B cell (primary cell): ENCODE measurements at regions of chr12 and their contacts with region 1.

Region 1: DNA sequence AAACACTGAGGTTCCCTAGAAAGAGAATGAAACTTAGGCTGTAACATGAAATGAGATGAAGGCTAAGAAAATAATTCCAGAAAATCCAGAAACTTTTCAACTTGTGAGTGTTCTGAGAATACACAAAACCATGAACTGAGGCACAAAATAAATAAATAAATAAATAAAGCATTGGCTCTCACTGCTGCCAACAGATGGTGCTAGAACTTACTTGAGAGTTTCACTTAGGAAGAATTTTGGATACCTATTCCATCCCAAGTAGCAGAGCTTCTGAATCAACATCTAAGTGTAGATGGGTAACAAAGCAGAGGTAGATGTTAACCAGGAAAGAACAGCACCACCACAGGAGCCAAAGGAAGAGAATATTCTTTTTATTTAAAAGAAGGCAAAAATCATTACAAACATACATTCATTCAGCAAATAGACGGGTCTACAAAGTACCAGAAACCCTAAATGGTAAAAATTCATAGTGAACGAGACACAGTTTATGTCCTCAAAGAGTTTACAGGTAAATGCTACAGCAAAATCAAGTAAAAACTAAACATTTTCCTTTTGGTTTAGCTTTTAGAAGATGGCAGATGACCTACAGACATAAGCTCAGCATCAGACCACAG is 16.7 kb downstream of the EPS8 start:
- DNase-seq: peak; percentile 22
- ATAC-seq: no peak
- H3K4me3 ChIP-seq: no peak overlapping the region
- H3K4me3 Mint-ChIP-seq: no peak overlapping the region
- H3K27ac ChIP-seq: no peak overlapping the region
- H3K27ac Mint-ChIP-seq: no peak overlapping the region
- H3K4me1 ChIP-seq: no peaks in the 10 kb centered on the region
- H3K4me1 Mint-ChIP-seq: no peaks in the 10 kb centered on the region
- H3K27me3 ChIP-seq: no peaks in the 10 kb centered on the region
- H3K27me3 Mint-ChIP-seq: peaks cover 11% of the 10 kb centered on the region
- CTCF ChIP-seq: peak; percentile 51

Region 2: GRCh38 chr12:15819644-15820437 is 47.3 kb after region 1 on chr12:
- CTCF ChIA-PET with region 1: no interaction called
- POLR2A ChIA-PET with region 1: no interaction called
- intact Hi-C with region 1: loop called (anchors 5 kb)
- DNase-seq: no peak
- ATAC-seq: no peak
- H3K4me3 ChIP-seq: no peak overlapping the region
- H3K4me3 Mint-ChIP-seq: no peak overlapping the region
- H3K27ac ChIP-seq: no peak overlapping the region
- H3K27ac Mint-ChIP-seq: no peak overlapping the region
- H3K4me1 ChIP-seq: no peaks in the 10 kb centered on the region
- H3K4me1 Mint-ChIP-seq: no peaks in the 10 kb centered on the region
- H3K27me3 ChIP-seq: peaks cover 0 to 2% (median 0%) of the 10 kb centered on the region in 4 experiments
- H3K27me3 Mint-ChIP-seq: peaks cover 7% of the 10 kb centered on the region
- CTCF ChIP-seq: no peak